ENCODE measurements at regions of chr7 and their contacts with region 1.

Region 1: DNA sequence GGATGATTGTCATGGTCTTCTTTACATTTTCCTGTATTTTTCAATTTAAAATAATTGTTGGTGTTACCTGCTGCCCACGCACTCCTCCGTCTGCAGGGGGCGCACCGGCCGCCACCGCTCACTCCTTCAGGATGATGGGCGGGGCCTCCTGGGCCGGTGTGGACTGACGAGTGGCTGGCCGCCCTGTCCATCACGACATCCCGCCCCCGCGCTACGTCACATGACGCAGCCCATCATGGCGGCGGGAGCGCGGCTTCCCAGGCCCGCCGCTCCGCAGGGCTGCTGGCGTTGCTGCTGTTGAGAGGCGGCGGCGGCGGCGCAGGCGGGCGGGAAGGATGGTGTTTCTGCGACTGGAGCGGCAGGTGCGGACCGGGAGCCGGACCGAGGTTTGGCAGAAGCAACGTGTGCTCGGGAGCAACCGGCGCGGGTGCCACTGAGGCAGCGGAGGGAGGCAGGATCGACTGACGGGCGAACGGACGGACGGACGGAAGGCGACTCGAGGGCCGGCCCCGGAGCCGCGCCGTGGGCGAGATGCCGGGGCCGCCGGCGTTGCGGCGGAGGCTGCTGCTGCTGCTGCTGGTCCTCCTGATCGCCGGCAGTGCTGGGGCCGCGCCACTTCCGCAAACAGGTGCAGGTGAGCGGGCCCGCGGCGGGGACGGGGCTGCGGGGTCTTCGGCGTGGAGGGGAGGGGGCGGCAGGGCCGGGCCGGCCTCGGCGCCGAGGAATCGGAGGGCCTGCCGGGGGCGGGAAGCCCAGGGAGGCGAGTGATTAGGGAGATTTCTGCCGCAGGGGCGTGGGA is at the start of gene LMTK2:
- H3K4me3 Mint-ChIP-seq: peak within 1 kb of the TSS; percentile 99
- H3K27ac Mint-ChIP-seq: peak within 1 kb of the TSS; percentile 94
- H3K4me1 Mint-ChIP-seq: peaks cover 11% of the 10 kb centered on the region
- H3K27me3 Mint-ChIP-seq: peaks cover 82% of the 10 kb centered on the region

Region 2: GRCh38 chr7:98000356-98000755 is 106.5 kb before region 1 on chr7:
- intact Hi-C with region 1: no loop called
- H3K4me3 Mint-ChIP-seq: no peak overlapping the region
- H3K27ac Mint-ChIP-seq: no peak overlapping the region
- H3K4me1 Mint-ChIP-seq: no peaks in the 10 kb centered on the region
- H3K27me3 Mint-ChIP-seq: peaks cover 14% of the 10 kb centered on the region

Region 3: GRCh38 chr7:98021588-98022351 is 85.1 kb before region 1 on chr7:
- intact Hi-C with region 1: loop called (anchors 5 kb)
- H3K4me3 Mint-ChIP-seq: no peak overlapping the region
- H3K27ac Mint-ChIP-seq: no peak overlapping the region
- H3K4me1 Mint-ChIP-seq: peaks cover 11% of the 10 kb centered on the region
- H3K27me3 Mint-ChIP-seq: peaks cover 32% of the 10 kb centered on the region

Region 4: GRCh38 chr7:98133181-98133580 is 26.3 kb after region 1 on chr7:
- intact Hi-C with region 1: loop called (anchors 2 kb)
- H3K4me3 Mint-ChIP-seq: no peak overlapping the region
- H3K27ac Mint-ChIP-seq: peak overlapping the region; percentile 50
- H3K4me1 Mint-ChIP-seq: peaks cover 79% of the 10 kb centered on the region
- H3K27me3 Mint-ChIP-seq: peaks cover 55% of the 10 kb centered on the region

Region 5: GRCh38 chr7:98162758-98163157 is 55.9 kb after region 1 on chr7:
- intact Hi-C with region 1: no loop called
- H3K4me3 Mint-ChIP-seq: no peak overlapping the region
- H3K27ac Mint-ChIP-seq: no peak overlapping the region
- H3K4me1 Mint-ChIP-seq: peaks cover 36% of the 10 kb centered on the region
- H3K27me3 Mint-ChIP-seq: peaks cover 56% of the 10 kb centered on the region

Measured in dendritic cell treated with granulocyte-macrophage colony-stimulating factor and Interleukin-4, amounts not matched to agents 40 ng/mL and 50 ng/mL, for 4 days (primary cell).